HepG2 (cell line): ENCODE measurements at regions of chr10 and their contacts with region 1.

Region 1: DNA sequence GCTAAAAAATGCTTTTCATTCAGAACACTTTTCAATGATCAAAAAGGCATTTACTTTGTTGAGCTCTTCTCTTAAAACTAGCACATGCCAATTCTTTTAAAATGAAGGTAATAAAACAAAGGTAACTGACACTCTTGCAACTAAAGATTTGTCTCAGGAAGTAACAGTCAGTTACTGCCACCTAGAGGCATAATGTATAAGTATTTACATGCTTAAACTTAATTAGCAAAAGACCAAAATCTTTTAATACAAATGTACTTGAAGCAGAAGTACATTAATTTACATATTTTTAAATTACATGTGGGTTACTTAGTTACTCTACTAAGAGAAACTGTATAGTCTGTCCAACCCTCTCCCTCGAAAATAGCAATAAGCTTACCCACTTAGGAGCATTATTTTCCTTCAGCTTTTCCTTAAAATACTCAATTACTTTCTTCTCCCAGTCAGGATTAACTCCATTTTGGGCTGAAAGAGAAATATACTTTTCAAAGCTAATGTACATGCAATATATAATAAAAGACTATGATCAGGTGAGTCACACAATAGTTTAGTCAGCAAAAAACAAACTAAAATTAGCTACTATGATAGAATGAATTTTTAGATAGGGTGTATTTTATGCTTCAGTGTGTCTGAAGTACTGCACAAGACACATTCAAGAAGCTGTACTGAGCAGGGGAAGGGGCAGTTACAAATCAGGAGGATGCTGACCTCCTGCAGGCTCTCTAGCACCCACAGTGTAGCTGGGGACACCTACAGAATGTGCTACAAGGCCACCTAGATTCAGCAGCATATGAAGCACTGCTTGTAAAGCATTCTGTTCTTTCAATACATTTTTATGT is 13.0 kb downstream of the MCMBP start:
- DNase-seq: peak; percentile 44
- ATAC-seq: no peak
- H3K4me3 ChIP-seq: no peak overlapping the region
- H3K27ac ChIP-seq: no peak overlapping the region
- H3K4me1 ChIP-seq: peaks cover 26% of the 10 kb centered on the region
- H3K27me3 ChIP-seq: no peaks in the 10 kb centered on the region
- CTCF ChIP-seq: peak; percentile 64
- EP300 ChIP-seq: no peak
- POLR2A ChIP-seq: no peak
- RAD21 ChIP-seq: 0 out of 2 replicates have a peak, but pooled peaks have one; percentile 16

Region 2: GRCh38 chr10:119616882-119617570 is 242.6 kb before region 1 on chr10:
- CTCF ChIA-PET with region 1: no interaction called
- POLR2A ChIA-PET with region 1: no interaction called
- in situ Hi-C with region 1: no loop called
- intact Hi-C with region 1: loop called (anchors 2 kb)
- DNase-seq: peak; percentile 50
- ATAC-seq: peak; percentile 79
- H3K4me3 ChIP-seq: no peak overlapping the region
- H3K27ac ChIP-seq: no peak overlapping the region
- H3K4me1 ChIP-seq: peaks cover 52% of the 10 kb centered on the region
- H3K27me3 ChIP-seq: peaks cover 0 to 3% of the 10 kb centered on the region in 2 experiments; a peak in 1 of 5 replicates
- CTCF ChIP-seq: peak; percentile 79
- EP300 ChIP-seq: no peak
- POLR2A ChIP-seq: no peak
- RAD21 ChIP-seq: peak; percentile 59; the same call in 1 of the 2 replicates